Heart left ventricle (tissue), 16 donors: ENCODE measurements at regions of chr1 and their contacts with region 1.

Region 1: DNA sequence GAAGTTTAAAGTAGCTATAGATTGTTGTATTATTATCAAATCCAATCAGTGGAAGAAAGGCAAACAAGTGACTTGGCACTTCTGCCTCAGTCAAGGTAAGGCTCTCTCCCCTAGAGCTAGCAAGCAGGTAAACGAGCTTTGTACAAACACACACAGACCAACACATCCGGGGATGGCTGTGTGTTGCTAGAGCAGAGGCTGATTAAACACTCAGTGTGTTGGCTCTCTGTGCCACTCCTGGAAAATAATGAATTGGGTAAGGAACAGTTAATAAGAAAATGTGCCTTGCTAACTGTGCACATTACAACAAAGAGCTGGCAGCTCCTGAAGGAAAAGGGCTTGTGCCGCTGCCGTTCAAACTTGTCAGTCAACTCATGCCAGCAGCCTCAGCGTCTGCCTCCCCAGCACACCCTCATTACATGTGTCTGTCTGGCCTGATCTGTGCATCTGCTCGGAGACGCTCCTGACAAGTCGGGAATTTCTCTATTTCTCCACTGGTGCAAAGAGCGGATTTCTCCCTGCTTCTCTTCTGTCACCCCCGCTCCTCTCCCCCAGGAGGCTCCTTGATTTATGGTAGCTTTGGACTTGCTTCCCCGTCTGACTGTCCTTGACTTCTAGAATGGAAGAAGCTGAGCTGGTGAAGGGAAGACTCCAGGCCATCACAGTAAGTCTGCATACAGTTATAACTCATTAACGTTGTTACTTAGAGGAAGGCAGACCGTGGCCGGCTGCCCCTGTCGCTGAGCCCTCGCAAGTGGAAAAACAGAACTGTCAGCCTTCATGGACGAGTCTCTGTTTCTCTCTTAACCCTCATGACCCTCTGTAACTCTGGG is at the start of gene PALMD:
- DNase-seq: peak; percentile 63 to 79 (median 68)
- ATAC-seq: peak; percentile 61 to 83 (median 68)
- H3K4me3 ChIP-seq: peak within 1 kb of the TSS; percentile 33 to 77 (median 64)
- H3K27ac ChIP-seq: peak within 1 kb of the TSS; percentile 87 to 98 (median 92)
- H3K4me1 ChIP-seq: peaks cover 0 to 43% (median 32%) of the 10 kb centered on the region in 12 donors
- H3K27me3 ChIP-seq: no peaks in the 10 kb centered on the region
- CTCF ChIP-seq: peak in 1 of 12 donors; percentile 18
- POLR2A ChIP-seq: peak in 1 of 2 donors; percentile 78
- total RNA-seq, gene PALMD: 74.0 to 236 (median 120) TPM

Region 2: DNA sequence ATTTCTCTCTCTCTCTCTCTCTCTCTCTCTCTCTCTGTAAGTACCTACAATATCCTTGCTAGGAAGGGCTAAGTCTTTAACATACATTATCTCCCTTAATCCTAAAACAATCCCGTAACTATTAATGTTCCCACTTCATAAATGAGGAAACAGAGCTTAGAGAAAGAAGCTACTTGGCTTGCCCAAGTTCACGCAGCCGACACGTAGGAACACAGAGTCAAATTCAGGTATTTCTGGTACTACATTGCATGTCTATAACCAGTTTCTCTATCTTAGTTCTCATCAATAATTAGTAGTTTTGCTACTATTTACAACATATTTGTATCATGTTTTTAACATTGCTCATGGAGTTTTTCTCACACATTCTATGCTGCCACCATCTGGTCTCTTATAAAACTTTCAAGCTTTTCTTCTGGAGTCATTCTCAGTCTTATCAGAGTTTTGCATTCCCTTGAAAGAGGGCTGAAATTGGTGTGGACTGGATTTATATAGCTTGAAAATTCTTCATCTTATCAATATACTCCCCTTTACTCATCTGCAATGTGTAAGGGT is 118.9 kb before region 1 on chr1:
- intact Hi-C with region 1: loop called in 8 of 10 experiments (anchors 5 to 10 kb)
- DNase-seq: no peak
- ATAC-seq: peak in 1 of 4 donors; percentile 42
- H3K4me3 ChIP-seq: no peak overlapping the region
- H3K27ac ChIP-seq: no peak overlapping the region
- H3K4me1 ChIP-seq: peaks cover 0 to 23% (median 3%) of the 10 kb centered on the region in 12 donors
- H3K27me3 ChIP-seq: no peaks in the 10 kb centered on the region
- CTCF ChIP-seq: peak in 11 of 12 donors; percentile 6 to 63 (median 42)
- POLR2A ChIP-seq: no peak

Region 3: GRCh38 chr1:99544328-99544727 is 101.6 kb before region 1 on chr1:
- intact Hi-C with region 1: loop called in 3 of 10 experiments (anchors 1 to 10 kb)
- DNase-seq: no peak
- ATAC-seq: no peak
- H3K4me3 ChIP-seq: no peak overlapping the region
- H3K27ac ChIP-seq: no peak overlapping the region
- H3K4me1 ChIP-seq: peaks cover 1 to 12% (median 7%) of the 10 kb centered on the region in 12 donors
- H3K27me3 ChIP-seq: no peaks in the 10 kb centered on the region
- CTCF ChIP-seq: no peak
- POLR2A ChIP-seq: no peak

Region 4: DNA sequence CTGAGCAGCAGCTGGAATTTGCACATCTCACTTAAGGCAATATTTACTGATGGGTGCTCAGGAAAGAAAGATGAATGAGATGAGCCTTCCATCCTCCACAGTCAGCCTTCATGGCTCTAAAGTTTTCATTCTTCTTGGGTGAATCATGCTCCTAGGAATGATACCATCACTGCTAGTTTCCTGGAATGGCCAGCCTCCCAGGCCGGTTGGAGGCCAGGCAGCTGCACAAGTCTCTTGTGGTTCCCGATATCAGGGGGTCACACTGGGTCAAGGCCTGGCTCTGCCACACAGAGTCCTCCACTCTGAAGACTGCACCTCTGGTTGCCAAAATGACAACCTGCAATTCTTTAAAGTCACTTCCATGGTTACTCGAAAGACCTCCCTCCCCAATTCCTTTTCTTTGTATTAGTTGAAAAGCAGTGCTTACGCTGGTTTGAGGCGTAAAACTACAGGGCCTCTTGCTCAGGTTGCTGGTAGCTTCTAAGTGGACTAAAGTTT is 46.2 kb before region 1 on chr1:
- intact Hi-C with region 1: loop called in 5 of 10 experiments (anchors 5 to 10 kb)
- DNase-seq: peak; percentile 24 to 69 (median 66)
- ATAC-seq: peak in 3 of 4 donors; percentile 55 to 90 (median 90)
- H3K4me3 ChIP-seq: no peak overlapping the region
- H3K27ac ChIP-seq: peak overlapping the region in 9 of 12 donors; percentile 0 to 82 (median 55)
- H3K4me1 ChIP-seq: peaks cover 0 to 45% (median 11%) of the 10 kb centered on the region in 12 donors
- H3K27me3 ChIP-seq: no peaks in the 10 kb centered on the region
- CTCF ChIP-seq: no peak
- POLR2A ChIP-seq: no peak

Region 5: GRCh38 chr1:99728494-99729235 is 82.8 kb after region 1 on chr1:
- intact Hi-C with region 1: loop called in 1 of 10 experiments (anchors 2 kb)
- DNase-seq: peak in 3 of 5 donors; percentile 28 to 33 (median 30)
- ATAC-seq: peak; percentile 78 to 95 (median 86)
- H3K4me3 ChIP-seq: peak overlapping the region in 8 of 12 donors; percentile 0 to 41 (median 26)
- H3K27ac ChIP-seq: peak overlapping the region; percentile 30 to 85 (median 73)
- H3K4me1 ChIP-seq: peaks cover 0 to 21% (median 8%) of the 10 kb centered on the region in 12 donors
- H3K27me3 ChIP-seq: no peaks in the 10 kb centered on the region
- CTCF ChIP-seq: peak; percentile 18 to 81 (median 45)
- POLR2A ChIP-seq: no peak